ENCODE measurements at regions of chr10 and their contacts with region 1.

Region 1: DNA sequence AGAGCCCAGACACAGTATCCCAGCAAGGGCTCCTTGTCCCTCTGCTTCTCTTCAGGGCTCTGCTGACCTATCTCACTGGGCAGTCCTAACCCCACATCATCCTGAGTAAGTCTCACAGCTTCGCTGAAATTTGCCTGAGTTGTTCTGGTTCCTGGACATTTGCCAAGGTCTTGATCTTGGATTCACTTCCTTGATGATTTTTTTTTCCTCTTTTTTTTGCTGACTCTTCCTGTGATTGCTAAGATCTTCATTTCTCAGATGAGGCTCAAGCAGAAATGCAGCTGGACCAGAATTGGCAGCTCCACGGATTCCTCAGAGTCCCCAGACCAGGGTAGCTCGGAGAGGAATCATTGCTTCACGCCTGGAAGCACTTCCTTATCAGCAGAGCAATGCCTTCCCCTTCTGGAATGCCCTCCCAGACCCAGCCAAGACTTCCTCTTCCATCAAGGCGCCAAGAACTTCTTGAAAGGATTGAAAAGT is 8.6 kb upstream of the AFAP1L2 start:
- DNase-seq: peak; percentile 21
- H3K4me3 Mint-ChIP-seq: peak overlapping the region; percentile 11
- H3K27ac Mint-ChIP-seq: peak overlapping the region; percentile 18
- H3K4me1 Mint-ChIP-seq: peaks cover 39% of the 10 kb centered on the region
- H3K27me3 Mint-ChIP-seq: no peaks in the 10 kb centered on the region
- CTCF ChIP-seq: no peak

Region 2: DNA sequence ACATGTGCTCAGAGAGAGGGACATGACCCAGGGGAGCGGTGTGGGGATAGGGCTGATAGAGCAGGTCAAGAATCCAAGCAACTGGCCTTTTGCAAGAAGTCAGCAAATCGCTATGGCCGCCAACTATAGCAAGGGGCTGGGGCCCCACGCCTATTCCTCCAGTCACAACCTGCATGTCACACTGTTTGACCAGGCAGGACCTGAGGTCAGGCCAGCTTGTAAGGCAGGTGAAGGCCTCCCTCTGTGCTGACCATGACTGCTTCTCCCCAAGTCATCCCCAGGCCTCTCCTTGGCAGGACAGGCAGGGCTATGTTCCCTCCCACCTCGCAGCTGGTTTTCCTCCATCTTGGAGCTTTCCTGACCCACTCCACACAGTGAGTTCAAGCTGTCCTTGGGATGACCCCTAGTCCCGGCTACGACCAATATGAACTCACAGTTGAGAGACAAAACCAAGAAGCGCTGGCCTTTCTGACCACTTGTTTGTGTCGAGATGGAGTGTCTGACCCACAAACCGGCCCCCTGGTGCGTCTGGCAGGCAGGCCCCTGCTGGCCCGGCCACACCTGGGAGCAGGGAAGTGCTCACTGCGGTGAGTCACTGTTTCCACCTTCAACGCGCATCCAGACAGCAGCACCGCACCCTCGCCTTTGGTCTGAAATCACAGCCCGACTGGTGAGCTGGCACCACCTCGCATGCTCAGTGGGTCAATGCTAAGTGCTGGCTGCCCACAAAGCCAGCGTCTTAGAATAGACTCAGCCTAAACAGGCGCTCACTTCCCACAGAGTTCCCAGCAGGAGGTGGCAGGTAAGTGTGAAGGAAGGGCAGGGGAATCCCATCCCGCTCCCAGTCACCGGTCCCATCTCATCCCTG is 92.5 kb before region 1 on chr10:
- CTCF ChIA-PET with region 1: no interaction called
- intact Hi-C with region 1: loop called (anchors 5 kb)
- DNase-seq: peak; percentile 85
- H3K4me3 Mint-ChIP-seq: peak overlapping the region; percentile 57
- H3K27ac Mint-ChIP-seq: peak overlapping the region; percentile 88
- H3K4me1 Mint-ChIP-seq: peaks cover 23% of the 10 kb centered on the region
- H3K27me3 Mint-ChIP-seq: no peaks in the 10 kb centered on the region
- CTCF ChIP-seq: no peak

Region 3: GRCh38 chr10:114374809-114375451 is 38.0 kb before region 1 on chr10:
- CTCF ChIA-PET with region 1: no interaction called
- intact Hi-C with region 1: loop called (anchors 5 kb)
- DNase-seq: no peak
- H3K4me3 Mint-ChIP-seq: no peak overlapping the region
- H3K27ac Mint-ChIP-seq: no peak overlapping the region
- H3K4me1 Mint-ChIP-seq: peaks cover 8% of the 10 kb centered on the region
- H3K27me3 Mint-ChIP-seq: no peaks in the 10 kb centered on the region
- CTCF ChIP-seq: no peak